Gastrocnemius medialis (tissue), 4 donors: ENCODE measurements at regions of chr18 and their contacts with region 1.

Region 1: DNA sequence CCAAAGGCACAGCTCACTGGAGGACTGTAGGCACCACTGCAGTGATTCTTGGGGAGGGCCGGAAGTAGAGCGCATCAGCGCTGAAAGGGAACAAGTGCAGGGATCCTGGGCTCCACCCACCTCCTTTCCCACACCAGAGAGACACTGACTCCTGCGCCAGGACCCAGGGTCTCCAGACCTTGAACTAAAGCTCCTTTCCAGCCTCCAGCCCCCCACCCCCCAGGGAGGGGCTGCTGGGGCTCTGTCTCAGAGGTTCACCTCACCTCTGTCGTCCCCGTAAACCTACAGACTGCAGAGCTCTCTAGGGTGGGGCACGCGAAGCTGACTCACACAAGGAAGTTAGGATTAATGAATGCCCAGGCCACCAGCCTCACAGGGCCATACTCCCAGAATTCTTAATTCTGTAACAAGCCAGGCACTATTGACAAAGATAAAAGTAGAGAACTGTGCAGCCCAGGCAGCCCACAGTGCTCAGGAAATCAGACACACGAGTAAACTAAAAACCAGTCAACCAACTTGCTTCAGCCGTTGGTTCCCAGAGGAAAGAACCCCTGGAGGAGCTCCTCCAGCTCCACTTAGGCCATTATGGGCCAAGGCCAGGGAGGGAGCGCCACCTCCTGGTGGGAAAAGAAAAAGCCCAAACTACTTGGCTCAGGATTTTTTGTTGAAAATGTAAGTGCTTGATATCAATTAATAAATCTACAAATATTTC is 45.1 kb upstream of the ACAA2 start:
- DNase-seq: peak; percentile 10 to 33
- ATAC-seq: peak in 1 of 2 donors; percentile 62
- H3K4me3 ChIP-seq: no peak overlapping the region
- H3K27ac ChIP-seq: no peak overlapping the region
- H3K4me1 ChIP-seq: no peaks in the 10 kb centered on the region
- H3K27me3 ChIP-seq: no peaks in the 10 kb centered on the region
- CTCF ChIP-seq: peak; percentile 74 to 86 (median 83)
- POLR2A ChIP-seq: no peak

Region 2: GRCh38 chr18:49500201-49500921 is 358.1 kb before region 1 on chr18:
- in situ Hi-C with region 1: loop called in 2 of 4 experiments (anchors 10 to 25 kb)
- intact Hi-C with region 1: no loop called
- DNase-seq: no peak
- ATAC-seq: no peak
- H3K4me3 ChIP-seq: no peak overlapping the region
- H3K27ac ChIP-seq: no peak overlapping the region
- H3K4me1 ChIP-seq: no peaks in the 10 kb centered on the region
- H3K27me3 ChIP-seq: peaks cover 4 to 10% (median 6%) of the 10 kb centered on the region in 3 donors
- CTCF ChIP-seq: no peak
- POLR2A ChIP-seq: no peak

Region 3: GRCh38 chr18:49510393-49511115 is 347.9 kb before region 1 on chr18:
- in situ Hi-C with region 1: loop called (anchors 5 to 25 kb)
- intact Hi-C with region 1: loop called (anchors 2 kb)
- DNase-seq: no peak
- ATAC-seq: peak in 1 of 2 donors; percentile 53
- H3K4me3 ChIP-seq: no peak overlapping the region
- H3K27ac ChIP-seq: no peak overlapping the region
- H3K4me1 ChIP-seq: no peaks in the 10 kb centered on the region
- H3K27me3 ChIP-seq: peaks cover 0 to 3% (median 0%) of the 10 kb centered on the region in 3 donors
- CTCF ChIP-seq: peak; percentile 42 to 76 (median 64)
- POLR2A ChIP-seq: no peak

Region 4: DNA sequence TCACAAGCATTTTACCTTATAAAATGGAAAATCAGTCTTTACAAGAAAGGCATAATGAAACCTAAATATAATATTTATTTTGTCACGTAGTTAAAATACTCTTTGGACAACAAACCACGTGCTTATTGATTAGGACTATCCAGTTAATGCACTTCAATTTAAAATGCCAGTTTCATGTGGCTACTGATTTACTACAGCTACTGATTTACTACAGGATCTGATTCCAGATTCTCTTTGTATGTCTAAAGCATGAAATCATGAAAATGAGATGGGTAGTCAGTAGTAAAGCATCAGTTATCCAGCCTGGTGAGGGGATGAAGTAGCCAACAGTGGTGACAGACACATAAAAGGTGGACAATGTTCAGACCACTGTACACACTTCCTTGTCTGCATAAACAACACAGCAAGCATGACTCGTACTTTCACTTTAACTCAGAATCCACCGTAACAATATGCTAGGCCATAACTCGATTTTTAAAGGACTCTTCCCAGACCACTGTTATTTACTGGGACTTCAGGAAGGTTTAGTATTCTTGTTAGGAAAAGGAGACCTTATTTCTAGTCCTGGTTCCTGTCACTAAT is 70.0 kb before region 1 on chr18:
- in situ Hi-C with region 1: no loop called
- intact Hi-C with region 1: no loop called
- DNase-seq: no peak
- ATAC-seq: no peak
- H3K4me3 ChIP-seq: no peak overlapping the region
- H3K27ac ChIP-seq: no peak overlapping the region
- H3K4me1 ChIP-seq: peaks cover 3 to 11% of the 10 kb centered on the region in 2 donors
- H3K27me3 ChIP-seq: no peaks in the 10 kb centered on the region
- CTCF ChIP-seq: no peak
- POLR2A ChIP-seq: no peak

Region 5: DNA sequence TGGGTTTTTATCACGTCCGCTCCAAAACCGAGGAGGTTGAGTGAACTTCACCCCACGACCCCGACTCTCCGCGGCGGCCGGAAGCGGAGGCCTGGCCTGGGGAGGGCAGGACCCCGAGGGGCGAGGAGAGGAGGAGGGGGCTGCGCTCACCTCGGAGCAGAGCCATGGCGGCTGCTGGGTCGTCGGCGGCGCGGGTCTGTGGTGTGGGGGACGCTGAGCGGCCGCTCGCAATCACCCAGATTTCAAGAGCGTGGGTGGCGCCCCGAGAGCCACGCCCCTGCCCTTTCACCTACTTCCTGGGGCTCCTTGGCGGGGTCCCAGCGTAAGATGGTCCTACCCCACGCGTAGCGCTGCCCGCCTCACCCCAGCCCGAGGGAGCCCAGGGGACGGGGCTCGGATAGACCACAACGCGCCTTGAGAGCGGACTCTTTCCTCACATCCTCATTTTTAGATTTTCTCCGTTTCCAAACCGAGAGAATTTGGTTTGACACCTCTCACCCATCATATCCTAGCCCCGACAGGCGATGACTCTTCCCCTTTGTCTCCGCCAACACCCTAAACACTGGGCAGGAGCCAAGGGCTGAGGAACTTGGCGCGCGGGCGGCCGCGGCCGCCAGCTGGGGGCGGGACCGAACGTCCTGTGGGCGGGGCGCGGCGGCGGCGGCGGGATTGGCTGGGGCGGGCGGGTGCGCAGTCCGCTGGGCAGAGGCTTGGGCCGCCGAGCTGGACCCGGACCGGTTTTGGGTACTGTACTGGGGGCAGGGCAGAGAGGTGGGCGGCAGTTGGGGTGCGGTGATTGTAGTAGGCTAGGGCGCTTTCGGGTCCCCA is 44.9 kb before region 1 on chr18 and contains the start of gene ACAA2:
- in situ Hi-C with region 1: no loop called
- intact Hi-C with region 1: loop called (anchors 5 kb)
- DNase-seq: peak; percentile 78 to 82
- ATAC-seq: peak; percentile 90 to 91
- H3K4me3 ChIP-seq: peak within 1 kb of the TSS; percentile 88 to 95 (median 92)
- H3K27ac ChIP-seq: peak within 1 kb of the TSS; percentile 93 to 99 (median 96)
- H3K4me1 ChIP-seq: peaks cover 14 to 20% of the 10 kb centered on the region in 2 donors
- H3K27me3 ChIP-seq: no peaks in the 10 kb centered on the region
- CTCF ChIP-seq: no peak
- POLR2A ChIP-seq: peak; percentile 38 to 65
- total RNA-seq, gene ACAA2: 73.7 to 95.7 (median 79.6) TPM

Region 6: GRCh38 chr18:51370996-51371395 is 1512.5 kb after region 1 on chr18:
- in situ Hi-C with region 1: no loop called
- intact Hi-C with region 1: no loop called
- DNase-seq: no peak
- ATAC-seq: no peak
- H3K4me3 ChIP-seq: no peak overlapping the region
- H3K27ac ChIP-seq: no peak overlapping the region
- H3K4me1 ChIP-seq: no peaks in the 10 kb centered on the region
- H3K27me3 ChIP-seq: no peaks in the 10 kb centered on the region
- CTCF ChIP-seq: no peak
- POLR2A ChIP-seq: no peak